ENCODE measurements at regions of chr7 and their contacts with region 1.

Region 1: GRCh38 chr7:13279854-13280435 is 592.5 kb downstream of the ARL4A start:
- DNase-seq: peak; percentile 72

Region 2: DNA sequence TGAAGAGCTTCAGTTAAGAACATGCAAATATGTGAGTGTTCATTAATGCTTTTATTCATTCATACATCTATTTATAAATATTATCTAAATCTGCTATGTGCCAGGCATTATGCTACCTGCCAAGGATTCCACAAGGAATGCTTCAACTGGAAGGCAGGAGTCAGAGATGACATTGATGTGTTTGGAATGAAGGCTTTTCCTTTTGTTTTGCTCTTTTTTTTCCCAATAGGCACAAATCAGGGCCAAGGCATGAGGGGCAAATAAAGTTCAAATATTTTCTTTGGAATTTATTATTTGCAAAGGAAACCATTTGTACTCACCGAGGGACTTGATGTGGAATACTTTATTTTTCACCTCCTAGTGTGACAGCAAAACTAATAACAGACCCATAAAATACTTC is 62.2 kb before region 1 on chr7:
- in situ Hi-C with region 1: no loop called
- DNase-seq: no peak

Region 3: DNA sequence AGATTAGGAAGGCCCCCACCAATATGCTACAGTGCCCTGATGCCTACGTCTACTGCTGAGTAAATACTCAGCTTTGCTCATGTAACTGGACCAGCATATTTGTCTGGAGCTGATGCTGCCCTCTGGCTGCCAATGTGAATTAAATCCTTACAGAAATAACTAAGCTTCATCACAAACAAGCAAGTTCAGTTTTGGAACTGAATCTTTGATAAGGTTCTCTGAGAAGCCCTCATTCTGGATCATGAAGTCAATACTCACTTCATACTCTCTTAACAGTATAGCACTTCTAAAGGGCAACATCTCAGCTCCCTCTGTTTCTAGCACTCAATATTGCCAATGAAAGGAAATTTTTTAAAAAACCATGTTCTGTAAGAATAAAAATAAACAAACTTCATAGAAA is 462.9 kb after region 1 on chr7:
- in situ Hi-C with region 1: loop called (anchors 5 kb)
- DNase-seq: peak; percentile 82

Region 4: DNA sequence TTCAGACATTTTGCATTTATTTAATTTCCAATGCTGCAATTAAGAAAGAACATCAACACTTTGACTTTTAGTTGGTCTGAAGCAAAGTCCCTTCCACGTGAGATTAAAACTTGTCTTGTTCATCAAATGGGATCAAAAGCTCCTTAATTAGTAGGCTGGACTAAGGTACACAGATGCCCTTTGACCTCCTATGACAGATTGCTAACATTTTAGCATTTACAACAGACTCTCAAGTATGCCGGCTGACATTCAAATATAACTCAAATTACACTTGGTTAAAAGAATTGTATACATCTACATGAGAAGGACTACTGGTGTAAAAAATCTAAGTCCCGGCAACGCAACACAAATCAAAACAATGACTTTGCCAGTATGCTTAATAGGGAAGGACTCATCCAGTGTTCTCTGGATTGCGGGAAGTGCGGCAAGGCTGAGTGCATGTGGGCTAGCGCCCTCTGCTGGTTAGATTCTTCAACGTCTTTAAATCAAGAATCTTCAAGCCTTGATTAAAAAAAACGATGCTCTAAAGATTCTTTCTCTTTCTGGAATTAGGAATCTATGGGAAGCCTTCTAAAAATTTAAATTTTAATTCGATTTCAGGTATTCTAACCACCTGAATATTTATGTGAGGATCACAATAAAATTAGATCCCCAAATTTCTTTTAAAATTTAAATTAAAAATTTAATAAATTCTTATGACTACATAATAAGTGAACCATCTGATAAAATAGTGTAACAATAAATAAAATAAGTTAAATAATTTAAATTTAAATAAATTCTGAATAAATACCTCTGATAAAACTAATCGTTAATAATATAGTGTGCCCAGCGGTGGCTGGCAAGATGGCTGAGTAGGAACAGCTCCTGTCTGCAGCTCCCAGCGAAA is 1177.9 kb after region 1 on chr7:
- in situ Hi-C with region 1: loop called (anchors 25 kb)
- DNase-seq: peak; percentile 91

Region 5: GRCh38 chr7:14691597-14692203 is 1411.8 kb after region 1 on chr7:
- in situ Hi-C with region 1: loop called (anchors 25 kb)
- DNase-seq: peak; percentile 67